Left ventricle myocardium inferior (tissue), 1 donor: ENCODE measurements at regions of chr7 and their contacts with region 1.

Region 1: DNA sequence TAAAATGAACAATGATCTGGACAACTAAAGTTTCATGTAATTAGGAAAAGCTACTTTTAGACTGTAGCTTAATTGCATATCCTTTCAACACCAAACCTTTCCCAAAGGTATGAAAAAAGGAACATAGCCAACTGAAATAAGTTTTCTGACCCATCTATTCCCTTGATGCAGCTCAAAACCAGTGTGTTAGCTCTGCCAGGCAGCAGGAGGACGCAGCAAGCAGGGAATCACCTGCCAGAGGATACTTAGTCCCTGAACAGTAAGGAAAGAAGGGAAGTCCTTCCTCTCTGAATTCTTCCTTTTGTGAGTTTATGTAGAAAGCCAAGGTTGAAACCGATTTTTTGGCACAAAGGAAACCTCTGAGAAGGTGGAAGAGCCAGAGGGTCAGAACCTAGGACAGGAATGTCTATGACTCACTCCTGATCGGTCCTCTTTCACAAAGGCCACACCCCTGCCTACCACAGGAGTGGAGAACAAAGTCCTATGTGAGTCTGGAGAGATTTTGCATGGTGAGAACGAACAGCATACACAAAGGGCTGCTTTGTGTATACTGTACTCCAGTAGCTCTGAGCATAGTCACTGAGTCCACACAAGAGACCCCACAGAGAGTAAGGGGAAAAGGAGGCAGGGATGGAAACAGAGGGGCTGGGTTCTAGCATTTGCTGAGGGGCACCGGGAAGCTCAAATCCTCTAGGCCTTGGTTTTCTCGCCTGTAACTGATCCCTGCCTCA is 68.8 kb upstream of the GSDME start:
- DNase-seq: no peak
- H3K4me3 ChIP-seq: no peak overlapping the region
- H3K27ac ChIP-seq: peak overlapping the region; percentile 11
- H3K4me1 ChIP-seq: peaks cover 56% of the 10 kb centered on the region
- H3K27me3 ChIP-seq: no peaks in the 10 kb centered on the region
- CTCF ChIP-seq: no peak

Region 2: DNA sequence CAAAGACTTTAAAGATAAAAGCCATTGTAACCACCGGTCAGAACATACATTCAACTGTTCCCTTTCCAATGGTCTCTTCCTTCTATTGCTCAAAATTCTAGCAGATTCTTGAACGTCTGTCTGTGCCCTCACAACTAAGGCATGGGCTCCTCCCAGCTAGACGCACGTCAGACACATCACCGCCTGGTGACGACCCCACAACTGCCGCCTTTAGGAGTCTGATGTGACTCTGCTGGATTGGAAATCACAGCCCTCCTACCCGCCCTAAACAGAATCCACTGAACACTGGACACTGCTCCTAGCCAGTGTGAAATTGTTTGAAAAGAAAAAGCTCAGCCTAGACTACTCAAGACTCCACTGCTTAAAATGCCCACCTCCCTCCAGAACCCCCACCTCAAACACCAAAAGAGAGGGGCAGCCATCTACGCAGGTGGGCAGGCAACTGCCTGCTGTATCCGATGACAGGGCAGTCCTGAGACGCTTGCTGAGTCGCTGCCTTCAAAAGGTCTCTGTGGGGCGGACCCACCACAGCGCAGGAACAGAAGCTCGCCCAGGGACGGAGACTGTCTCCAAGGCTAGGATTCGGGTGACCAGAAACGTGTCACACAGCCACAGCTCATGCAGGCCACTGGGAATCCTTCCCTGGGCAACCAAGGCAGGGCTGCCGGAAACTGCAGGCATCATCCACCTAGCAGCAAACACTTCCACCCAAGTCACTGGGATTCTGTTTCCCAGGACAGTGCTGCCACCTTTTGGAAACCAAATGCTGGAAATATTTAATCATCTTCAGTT is 103.5 kb before region 1 on chr7:
- intact Hi-C with region 1: no loop called
- DNase-seq: no peak
- H3K4me3 ChIP-seq: no peak overlapping the region
- H3K27ac ChIP-seq: no peak overlapping the region
- H3K4me1 ChIP-seq: no peaks in the 10 kb centered on the region
- H3K27me3 ChIP-seq: no peaks in the 10 kb centered on the region
- CTCF ChIP-seq: peak; percentile 46

Region 3: GRCh38 chr7:25069900-25070443 is 243.9 kb after region 1 on chr7:
- intact Hi-C with region 1: loop called (anchors 5 kb)
- DNase-seq: peak; percentile 19
- H3K4me3 ChIP-seq: peak overlapping the region; percentile 54
- H3K27ac ChIP-seq: no peak overlapping the region
- H3K4me1 ChIP-seq: peaks cover 4% of the 10 kb centered on the region
- H3K27me3 ChIP-seq: no peaks in the 10 kb centered on the region
- CTCF ChIP-seq: peak; percentile 93

Region 4: GRCh38 chr7:25272265-25272664 is 446.2 kb after region 1 on chr7:
- intact Hi-C with region 1: no loop called
- DNase-seq: no peak
- H3K4me3 ChIP-seq: no peak overlapping the region
- H3K27ac ChIP-seq: no peak overlapping the region
- H3K4me1 ChIP-seq: no peaks in the 10 kb centered on the region
- H3K27me3 ChIP-seq: no peaks in the 10 kb centered on the region
- CTCF ChIP-seq: no peak